ENCODE measurements at regions of chr3 and their contacts with region 1.

Region 1: GRCh38 chr3:10026084-10026890 is at the start of gene FANCD2:
- DNase-seq: peak; percentile 87
- H3K4me3 ChIP-seq: peak within 1 kb of the TSS; percentile 72 to 82 (median 81)
- H3K27ac ChIP-seq: peak within 1 kb of the TSS; percentile 88
- H3K4me1 ChIP-seq: peaks cover 25% of the 10 kb centered on the region
- H3K27me3 ChIP-seq: no peaks in the 10 kb centered on the region
- CTCF ChIP-seq: no peak
- total RNA-seq, gene FANCD2: 6.7 to 23.6 TPM

Region 2: GRCh38 chr3:9638155-9638554 is 388.1 kb before region 1 on chr3:
- CTCF ChIA-PET with region 1: no interaction called
- dilution Hi-C with region 1: no loop called
- in situ Hi-C with region 1: no loop called
- intact Hi-C with region 1: no loop called
- DNase-seq: no peak
- H3K4me3 ChIP-seq: no peak overlapping the region
- H3K27ac ChIP-seq: no peak overlapping the region
- H3K4me1 ChIP-seq: no peaks in the 10 kb centered on the region
- H3K27me3 ChIP-seq: no peaks in the 10 kb centered on the region
- CTCF ChIP-seq: no peak

Region 3: GRCh38 chr3:9800525-9800924 is 225.8 kb before region 1 on chr3:
- CTCF ChIA-PET with region 1: no interaction called
- dilution Hi-C with region 1: no loop called
- in situ Hi-C with region 1: no loop called
- intact Hi-C with region 1: no loop called
- DNase-seq: no peak
- H3K4me3 ChIP-seq: no peak overlapping the region
- H3K27ac ChIP-seq: no peak overlapping the region
- H3K4me1 ChIP-seq: no peaks in the 10 kb centered on the region
- H3K27me3 ChIP-seq: no peaks in the 10 kb centered on the region
- CTCF ChIP-seq: peak in 1 of 2 donors; percentile 34

Region 4: DNA sequence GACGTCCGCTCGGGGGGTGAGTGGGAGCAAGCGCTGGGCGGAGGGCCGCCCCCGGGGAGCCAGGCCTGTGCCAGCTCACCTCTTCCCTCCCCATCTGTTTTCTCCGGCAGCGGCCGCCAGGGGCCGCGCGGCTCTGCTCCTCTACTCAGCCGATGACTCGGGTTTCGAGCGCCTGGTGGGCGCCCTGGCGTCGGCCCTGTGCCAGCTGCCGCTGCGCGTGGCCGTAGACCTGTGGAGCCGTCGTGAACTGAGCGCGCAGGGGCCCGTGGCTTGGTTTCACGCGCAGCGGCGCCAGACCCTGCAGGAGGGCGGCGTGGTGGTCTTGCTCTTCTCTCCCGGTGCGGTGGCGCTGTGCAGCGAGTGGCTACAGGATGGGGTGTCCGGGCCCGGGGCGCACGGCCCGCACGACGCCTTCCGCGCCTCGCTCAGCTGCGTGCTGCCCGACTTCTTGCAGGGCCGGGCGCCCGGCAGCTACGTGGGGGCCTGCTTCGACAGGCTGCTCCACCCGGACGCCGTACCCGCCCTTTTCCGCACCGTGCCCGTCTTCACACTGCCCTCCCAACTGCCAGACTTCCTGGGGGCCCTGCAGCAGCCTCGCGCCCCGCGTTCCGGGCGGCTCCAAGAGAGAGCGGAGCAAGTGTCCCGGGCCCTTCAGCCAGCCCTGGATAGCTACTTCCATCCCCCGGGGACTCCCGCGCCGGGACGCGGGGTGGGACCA is 93.3 kb before region 1 on chr3:
- CTCF ChIA-PET with region 1: no interaction called
- dilution Hi-C with region 1: no loop called
- in situ Hi-C with region 1: no loop called
- intact Hi-C with region 1: loop called (anchors 5 kb)
- DNase-seq: peak; percentile 64
- H3K4me3 ChIP-seq: peak overlapping the region; percentile 66 to 91 (median 79)
- H3K27ac ChIP-seq: no peak overlapping the region
- H3K4me1 ChIP-seq: peaks cover 20% of the 10 kb centered on the region
- H3K27me3 ChIP-seq: no peaks in the 10 kb centered on the region
- CTCF ChIP-seq: peak; percentile 36 to 85

Region 5: DNA sequence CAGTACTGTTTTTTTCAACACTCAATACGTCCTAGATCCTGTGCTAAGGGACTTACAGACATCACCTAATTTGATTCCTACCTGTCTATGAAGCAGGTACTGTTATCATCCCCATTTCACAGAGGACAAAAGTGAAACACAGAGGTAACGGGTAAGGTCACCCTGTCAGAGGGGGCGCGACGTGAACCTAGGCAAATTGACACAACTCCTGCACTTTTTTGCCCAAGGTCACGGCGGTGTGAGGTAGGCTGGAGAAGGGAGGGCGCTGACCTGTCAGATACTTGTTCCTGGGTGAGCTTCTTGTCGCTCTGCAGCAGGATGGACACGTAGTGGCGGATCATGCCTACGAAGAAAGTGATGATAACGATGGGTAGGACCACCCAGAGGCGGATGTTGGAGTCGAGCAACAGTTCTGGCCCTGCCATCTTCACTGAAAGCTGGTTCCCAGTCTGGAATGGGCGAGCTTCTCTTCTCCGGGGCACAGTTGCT is 40.0 kb before region 1 on chr3:
- CTCF ChIA-PET with region 1: no interaction called
- dilution Hi-C with region 1: no loop called
- in situ Hi-C with region 1: no loop called
- intact Hi-C with region 1: loop called (anchors 2 kb)
- DNase-seq: peak; percentile 30
- H3K4me3 ChIP-seq: peak overlapping the region; percentile 87 to 98 (median 92)
- H3K27ac ChIP-seq: peak overlapping the region; percentile 89
- H3K4me1 ChIP-seq: peaks cover 23% of the 10 kb centered on the region
- H3K27me3 ChIP-seq: no peaks in the 10 kb centered on the region
- CTCF ChIP-seq: no peak

Region 6: GRCh38 chr3:10047876-10048275 is 21.6 kb after region 1 on chr3:
- CTCF ChIA-PET with region 1: interaction called, 15 read pairs
- dilution Hi-C with region 1: no loop called
- in situ Hi-C with region 1: no loop called
- intact Hi-C with region 1: no loop called
- DNase-seq: no peak
- H3K4me3 ChIP-seq: no peak overlapping the region
- H3K27ac ChIP-seq: no peak overlapping the region
- H3K4me1 ChIP-seq: no peaks in the 10 kb centered on the region
- H3K27me3 ChIP-seq: no peaks in the 10 kb centered on the region
- CTCF ChIP-seq: no peak

Region 7: DNA sequence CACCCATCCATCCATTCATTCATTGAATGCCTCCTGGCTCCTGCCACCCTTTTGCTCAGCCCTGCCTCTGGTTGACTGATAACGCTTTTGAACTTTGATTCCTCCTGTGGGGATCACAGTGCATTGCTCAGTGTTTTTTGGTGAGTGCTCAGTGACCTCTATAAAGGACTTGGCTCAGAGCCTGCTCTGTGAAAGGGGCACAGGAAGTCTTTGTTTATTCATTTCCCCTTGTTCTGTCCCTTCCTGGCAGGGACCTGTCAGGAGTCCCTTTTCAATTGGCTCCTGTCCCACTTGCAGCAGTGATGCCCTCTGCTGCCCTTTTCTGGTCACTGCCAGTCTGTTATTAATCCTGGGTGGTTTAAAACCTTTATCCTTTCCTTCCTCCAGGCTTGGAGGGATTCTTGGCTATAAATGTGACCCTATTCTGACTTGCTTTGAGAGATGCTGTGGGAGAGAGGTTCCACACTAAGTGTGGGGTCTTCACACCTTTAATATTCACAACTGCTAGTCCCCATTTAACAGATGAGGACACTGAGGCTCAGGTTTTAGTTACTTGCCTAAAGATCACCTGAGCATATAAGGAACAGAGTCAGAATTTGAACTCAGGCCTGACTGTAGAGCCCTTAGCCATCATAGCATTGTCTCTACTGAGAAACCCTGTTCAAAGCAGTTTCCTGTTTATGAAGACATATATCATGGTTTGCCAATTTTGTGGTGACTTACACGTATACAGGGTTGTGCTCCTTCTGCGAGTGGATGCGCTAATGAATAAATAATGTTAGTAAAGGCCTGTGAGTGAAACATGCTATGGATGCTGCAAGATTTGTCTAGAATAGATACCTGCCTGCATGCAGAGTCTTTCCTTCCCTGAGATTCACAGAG is 198.7 kb after region 1 on chr3:
- CTCF ChIA-PET with region 1: no interaction called
- dilution Hi-C with region 1: no loop called
- in situ Hi-C with region 1: no loop called
- intact Hi-C with region 1: loop called (anchors 10 kb)
- DNase-seq: peak; percentile 64
- H3K4me3 ChIP-seq: no peak overlapping the region
- H3K27ac ChIP-seq: no peak overlapping the region
- H3K4me1 ChIP-seq: peaks cover 20% of the 10 kb centered on the region
- H3K27me3 ChIP-seq: no peaks in the 10 kb centered on the region
- CTCF ChIP-seq: peak; percentile 84 to 85